ENCODE measurements at regions of chr20 and their contacts with region 1.

Region 1: GRCh38 chr20:36645998-36646397 is at the start of gene SLA2:
- DNase-seq: peak; percentile 70 to 88
- ATAC-seq: peak; percentile 76 to 90 (median 86)
- H3K4me3 ChIP-seq: peak within 1 kb of the TSS; percentile 54
- H3K4me3 Mint-ChIP-seq: peak within 1 kb of the TSS; percentile 95
- H3K27ac ChIP-seq: peak within 1 kb of the TSS; percentile 85
- H3K27ac Mint-ChIP-seq: peak within 1 kb of the TSS; percentile 97 to 98
- H3K4me1 ChIP-seq: peaks cover 57% of the 10 kb centered on the region
- H3K4me1 Mint-ChIP-seq: peaks cover 56 to 59% of the 10 kb centered on the region in 2 donors
- H3K27me3 ChIP-seq: no peaks in the 10 kb centered on the region
- H3K27me3 Mint-ChIP-seq: no peaks in the 10 kb centered on the region
- CTCF ChIP-seq: no peak
- total RNA-seq, gene SLA2: 77.0 to 116 (median 90.3) TPM

Region 2: GRCh38 chr20:36460648-36461599 is 185.1 kb before region 1 on chr20:
- intact Hi-C with region 1: loop called (anchors 5 kb)
- DNase-seq: peak; percentile 87 to 97
- ATAC-seq: peak; percentile 78 to 91 (median 86)
- H3K4me3 ChIP-seq: peak overlapping the region; percentile 53
- H3K4me3 Mint-ChIP-seq: peak overlapping the region; percentile 86
- H3K27ac ChIP-seq: peak overlapping the region; percentile 89
- H3K27ac Mint-ChIP-seq: peak overlapping the region; percentile 95 to 96
- H3K4me1 ChIP-seq: peaks cover 49% of the 10 kb centered on the region
- H3K4me1 Mint-ChIP-seq: peaks cover 47 to 48% of the 10 kb centered on the region in 2 donors
- H3K27me3 ChIP-seq: no peaks in the 10 kb centered on the region
- H3K27me3 Mint-ChIP-seq: peaks cover 0 to 2% of the 10 kb centered on the region in 2 donors
- CTCF ChIP-seq: no peak

Region 3: GRCh38 chr20:36573103-36573794 is 72.7 kb before region 1 on chr20 and contains the start of gene TGIF2:
- intact Hi-C with region 1: loop called (anchors 5 kb)
- DNase-seq: peak; percentile 78 to 96
- ATAC-seq: peak; percentile 67 to 89 (median 81)
- H3K4me3 ChIP-seq: peak within 1 kb of the TSS; percentile 100
- H3K4me3 Mint-ChIP-seq: peak within 1 kb of the TSS; percentile 92
- H3K27ac ChIP-seq: peak within 1 kb of the TSS; percentile 98
- H3K27ac Mint-ChIP-seq: peak within 1 kb of the TSS; percentile 90 to 93
- H3K4me1 ChIP-seq: peaks cover 23% of the 10 kb centered on the region
- H3K4me1 Mint-ChIP-seq: peaks cover 28 to 31% of the 10 kb centered on the region in 2 donors
- H3K27me3 ChIP-seq: no peaks in the 10 kb centered on the region
- H3K27me3 Mint-ChIP-seq: no peaks in the 10 kb centered on the region
- CTCF ChIP-seq: no peak
- total RNA-seq, gene TGIF2: 19.9 to 28.5 (median 25.9) TPM

Region 4: GRCh38 chr20:36613974-36614373 is 32.0 kb before region 1 on chr20:
- intact Hi-C with region 1: loop called (anchors 2 kb)
- DNase-seq: no peak
- ATAC-seq: no peak
- H3K4me3 ChIP-seq: no peak overlapping the region
- H3K4me3 Mint-ChIP-seq: peak overlapping the region; percentile 28
- H3K27ac ChIP-seq: no peak overlapping the region
- H3K27ac Mint-ChIP-seq: peak overlapping the region; percentile 80 to 85
- H3K4me1 ChIP-seq: peaks cover 11% of the 10 kb centered on the region
- H3K4me1 Mint-ChIP-seq: peaks cover 7 to 43% of the 10 kb centered on the region in 2 donors
- H3K27me3 ChIP-seq: no peaks in the 10 kb centered on the region
- H3K27me3 Mint-ChIP-seq: no peaks in the 10 kb centered on the region
- CTCF ChIP-seq: no peak

Region 5: DNA sequence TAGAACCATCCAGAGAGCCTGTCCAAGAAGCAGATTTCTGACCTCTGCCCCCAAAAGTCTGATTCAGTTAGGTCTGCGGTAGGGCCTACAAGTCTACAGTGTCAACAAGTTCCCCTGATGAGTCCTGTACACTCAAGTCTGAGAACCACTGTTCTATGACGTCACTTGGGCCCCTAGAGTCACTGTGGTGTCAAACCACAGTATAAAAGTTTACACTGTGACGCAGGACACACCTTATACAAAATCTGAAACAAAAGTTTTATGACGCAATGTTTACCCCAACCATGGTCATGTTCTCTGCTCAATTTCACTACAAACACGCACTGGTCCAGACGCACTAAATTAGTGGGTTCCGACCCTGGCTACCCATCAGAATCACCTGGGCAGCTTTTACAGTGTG is 17.9 kb before region 1 on chr20:
- intact Hi-C with region 1: loop called (anchors 1 kb)
- DNase-seq: peak; percentile 61 to 81
- ATAC-seq: peak; percentile 73 to 88 (median 80)
- H3K4me3 ChIP-seq: no peak overlapping the region
- H3K4me3 Mint-ChIP-seq: peak overlapping the region; percentile 66
- H3K27ac ChIP-seq: peak overlapping the region; percentile 77
- H3K27ac Mint-ChIP-seq: peak overlapping the region; percentile 93 to 95
- H3K4me1 ChIP-seq: peaks cover 50% of the 10 kb centered on the region
- H3K4me1 Mint-ChIP-seq: peaks cover 51 to 63% of the 10 kb centered on the region in 2 donors
- H3K27me3 ChIP-seq: no peaks in the 10 kb centered on the region
- H3K27me3 Mint-ChIP-seq: no peaks in the 10 kb centered on the region
- CTCF ChIP-seq: no peak

Region 6: GRCh38 chr20:36886859-36887751 is 241.1 kb after region 1 on chr20:
- intact Hi-C with region 1: loop called (anchors 10 kb)
- DNase-seq: peak; percentile 55 to 87
- ATAC-seq: peak; percentile 85 to 93 (median 92)
- H3K4me3 ChIP-seq: no peak overlapping the region
- H3K4me3 Mint-ChIP-seq: peak overlapping the region; percentile 11
- H3K27ac ChIP-seq: no peak overlapping the region
- H3K27ac Mint-ChIP-seq: peak overlapping the region; percentile 56 to 80
- H3K4me1 ChIP-seq: peaks cover 11% of the 10 kb centered on the region
- H3K4me1 Mint-ChIP-seq: peaks cover 11 to 12% of the 10 kb centered on the region in 2 donors
- H3K27me3 ChIP-seq: no peaks in the 10 kb centered on the region
- H3K27me3 Mint-ChIP-seq: no peaks in the 10 kb centered on the region
- CTCF ChIP-seq: peak; percentile 67

Measured in natural killer cell (primary cell).